ENCODE measurements at regions of chr2 and their contacts with region 1.

Region 1: DNA sequence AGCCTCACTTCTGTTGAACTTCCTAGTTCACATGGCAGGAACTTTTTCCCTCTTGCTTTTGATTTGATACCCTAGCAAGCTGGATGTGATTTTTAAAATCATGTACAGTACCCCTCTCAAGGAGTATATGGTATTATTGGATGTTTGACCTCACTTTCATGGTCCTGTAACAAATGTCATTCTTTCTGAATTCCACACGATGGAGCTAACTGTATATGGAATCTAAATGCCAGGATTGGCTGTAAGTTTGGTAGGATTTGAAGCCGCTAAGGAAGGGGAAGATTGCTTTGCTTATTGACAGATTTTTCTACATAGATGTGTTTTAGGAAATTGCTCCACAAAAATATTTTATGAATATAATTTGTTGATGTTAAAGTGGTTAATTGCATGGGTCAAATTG is 18.3 kb downstream of the MAIP1 start:
- DNase-seq: no peak
- H3K4me3 ChIP-seq: no peak overlapping the region
- H3K27ac ChIP-seq: no peak overlapping the region
- H3K4me1 ChIP-seq: no peaks in the 10 kb centered on the region
- H3K27me3 ChIP-seq: no peaks in the 10 kb centered on the region
- CTCF ChIP-seq: peak in 2 of 3 experiments; percentile 49 to 66; a peak in 2 of 4 replicates
- EP300 ChIP-seq: no peak
- POLR2A ChIP-seq: no peak
- RAD21 ChIP-seq: peak; percentile 94

Region 2: DNA sequence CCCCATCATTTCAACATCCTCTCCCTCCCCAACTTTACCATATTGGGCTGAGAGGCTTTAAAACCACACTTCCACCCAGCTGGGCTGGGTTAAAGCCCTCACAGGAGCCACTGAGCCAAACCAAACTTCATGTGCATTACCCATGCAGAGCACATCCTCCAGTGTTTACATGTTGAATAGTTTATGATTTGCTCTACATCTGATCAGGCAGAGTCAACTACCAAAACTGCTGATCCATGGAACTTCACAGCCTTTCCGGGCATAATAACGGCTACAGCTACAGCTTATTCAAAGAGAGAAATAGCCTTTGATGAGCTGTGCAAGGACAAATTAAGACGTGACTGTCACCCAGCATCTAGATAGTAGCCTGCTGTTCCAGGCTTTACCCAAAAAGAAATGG is 20.7 kb after region 1 on chr2:
- CTCF ChIA-PET with region 1: no interaction called
- POLR2A ChIA-PET with region 1: no interaction called
- DNase-seq: no peak
- H3K4me3 ChIP-seq: no peak overlapping the region
- H3K27ac ChIP-seq: no peak overlapping the region
- H3K4me1 ChIP-seq: no peaks in the 10 kb centered on the region
- H3K27me3 ChIP-seq: peaks cover 0 to 1% (median 0%) of the 10 kb centered on the region in 4 experiments; a peak in 1 of 7 replicates
- CTCF ChIP-seq: no peak
- EP300 ChIP-seq: no peak
- POLR2A ChIP-seq: no peak
- RAD21 ChIP-seq: no peak

Region 3: DNA sequence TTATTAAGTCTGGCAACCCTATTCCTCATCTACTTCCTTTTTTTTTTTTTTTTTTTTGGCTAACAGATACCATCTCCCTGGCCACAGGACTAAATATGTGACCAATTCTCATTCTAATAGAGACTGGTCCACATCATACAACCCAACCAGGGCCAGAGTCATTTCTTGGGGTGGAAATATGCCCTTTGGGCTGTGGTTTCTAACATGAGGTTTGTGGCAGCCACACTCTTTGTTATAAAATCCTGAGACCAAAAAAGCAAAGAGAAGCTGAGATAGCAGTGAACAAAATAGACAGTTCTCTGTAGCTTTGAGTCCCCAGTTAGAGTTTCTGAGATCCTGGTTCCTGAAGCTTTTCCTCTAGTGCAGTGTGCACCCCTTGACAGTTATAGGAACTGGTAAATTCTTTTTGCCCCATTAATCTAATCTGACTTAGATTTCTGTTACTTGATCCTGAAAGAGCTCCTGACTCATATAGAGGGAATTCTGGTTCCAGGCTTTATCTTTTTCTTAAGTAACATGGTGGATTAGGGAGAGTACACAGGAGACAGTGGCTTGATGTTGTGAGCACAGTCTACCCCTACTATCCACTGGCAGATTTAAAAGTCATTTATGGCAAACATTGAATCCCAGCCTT is 68.5 kb after region 1 on chr2:
- CTCF ChIA-PET with region 1: no interaction called
- POLR2A ChIA-PET with region 1: no interaction called
- DNase-seq: no peak
- H3K4me3 ChIP-seq: no peak overlapping the region
- H3K27ac ChIP-seq: no peak overlapping the region
- H3K4me1 ChIP-seq: peaks cover 1 to 7% (median 4%) of the 10 kb centered on the region in 4 experiments; a peak in 5 of 7 replicates
- H3K27me3 ChIP-seq: no peaks in the 10 kb centered on the region
- CTCF ChIP-seq: no peak
- EP300 ChIP-seq: no peak
- POLR2A ChIP-seq: no peak
- RAD21 ChIP-seq: no peak

Region 4: GRCh38 chr2:200338701-200339100 is 365.0 kb after region 1 on chr2:
- CTCF ChIA-PET with region 1: no interaction called
- POLR2A ChIA-PET with region 1: no interaction called
- DNase-seq: no peak
- H3K4me3 ChIP-seq: no peak overlapping the region
- H3K27ac ChIP-seq: no peak overlapping the region
- H3K4me1 ChIP-seq: peaks cover 4 to 8% (median 7%) of the 10 kb centered on the region in 4 experiments; a peak in 5 of 7 replicates
- H3K27me3 ChIP-seq: no peaks in the 10 kb centered on the region
- CTCF ChIP-seq: no peak
- EP300 ChIP-seq: no peak
- POLR2A ChIP-seq: no peak
- RAD21 ChIP-seq: no peak

Region 5: GRCh38 chr2:200471324-200471848 is 497.7 kb after region 1 on chr2:
- CTCF ChIA-PET with region 1: interaction called, 21 read pairs
- POLR2A ChIA-PET with region 1: no interaction called
- DNase-seq: no peak
- H3K4me3 ChIP-seq: no peak overlapping the region
- H3K27ac ChIP-seq: no peak overlapping the region
- H3K4me1 ChIP-seq: peaks cover 0 to 3% (median under 1%) of the 10 kb centered on the region in 4 experiments; a peak in 2 of 7 replicates
- H3K27me3 ChIP-seq: no peaks in the 10 kb centered on the region
- CTCF ChIP-seq: peak; percentile 28 to 60 (median 59)
- EP300 ChIP-seq: no peak
- POLR2A ChIP-seq: no peak
- RAD21 ChIP-seq: peak; percentile 72 to 77

Measured in H1 (cell line).